ENCODE measurements at regions of chr11 and their contacts with region 1.

Region 1: DNA sequence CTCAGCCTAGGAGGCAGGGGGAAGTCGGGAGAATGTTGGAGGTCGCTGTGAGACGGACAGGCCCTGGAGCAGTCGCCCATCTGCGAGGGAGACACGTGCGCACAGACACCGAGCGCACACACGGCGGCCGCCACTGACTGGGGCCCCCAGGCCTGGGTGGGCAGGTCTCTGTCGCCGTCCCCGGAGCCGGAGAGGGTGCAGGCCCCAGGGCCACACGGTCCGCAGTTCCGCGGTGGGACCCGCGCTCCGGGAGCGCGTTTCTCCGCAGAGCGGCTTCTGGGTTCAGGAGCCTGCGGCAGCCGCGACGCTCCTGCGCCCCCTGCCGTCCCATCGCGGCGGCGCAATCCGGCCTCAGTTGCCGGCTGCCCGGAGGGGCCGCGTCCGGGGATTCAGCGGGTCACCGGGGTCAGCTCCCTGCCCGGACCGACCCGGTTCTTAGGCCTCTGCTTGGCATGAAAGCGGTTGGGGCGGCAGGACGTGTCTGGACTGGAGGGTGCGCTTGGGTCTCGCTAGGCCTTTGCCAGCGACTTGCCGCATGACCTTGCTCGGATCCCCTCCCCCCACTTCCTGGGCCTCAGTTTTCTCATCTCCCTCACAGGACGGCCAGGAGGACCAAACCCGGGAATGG is 31.2 kb downstream of the PDE2A start:
- DNase-seq: peak; percentile 59
- H3K4me3 ChIP-seq: peak overlapping the region; percentile 31
- H3K27ac ChIP-seq: no peak overlapping the region
- H3K4me1 ChIP-seq: no peaks in the 10 kb centered on the region
- CTCF ChIP-seq: peak; percentile 84

Region 2: GRCh38 chr11:72471005-72471898 is 171.7 kb before region 1 on chr11:
- CTCF ChIA-PET with region 1: no interaction called
- POLR2A ChIA-PET with region 1: no interaction called
- intact Hi-C with region 1: loop called (anchors 10 kb)
- DNase-seq: peak; percentile 66
- H3K4me3 ChIP-seq: no peak overlapping the region
- H3K27ac ChIP-seq: no peak overlapping the region
- H3K4me1 ChIP-seq: no peaks in the 10 kb centered on the region
- CTCF ChIP-seq: peak; percentile 92